ENCODE measurements at regions of chrX and their contacts with region 1.

Region 1: DNA sequence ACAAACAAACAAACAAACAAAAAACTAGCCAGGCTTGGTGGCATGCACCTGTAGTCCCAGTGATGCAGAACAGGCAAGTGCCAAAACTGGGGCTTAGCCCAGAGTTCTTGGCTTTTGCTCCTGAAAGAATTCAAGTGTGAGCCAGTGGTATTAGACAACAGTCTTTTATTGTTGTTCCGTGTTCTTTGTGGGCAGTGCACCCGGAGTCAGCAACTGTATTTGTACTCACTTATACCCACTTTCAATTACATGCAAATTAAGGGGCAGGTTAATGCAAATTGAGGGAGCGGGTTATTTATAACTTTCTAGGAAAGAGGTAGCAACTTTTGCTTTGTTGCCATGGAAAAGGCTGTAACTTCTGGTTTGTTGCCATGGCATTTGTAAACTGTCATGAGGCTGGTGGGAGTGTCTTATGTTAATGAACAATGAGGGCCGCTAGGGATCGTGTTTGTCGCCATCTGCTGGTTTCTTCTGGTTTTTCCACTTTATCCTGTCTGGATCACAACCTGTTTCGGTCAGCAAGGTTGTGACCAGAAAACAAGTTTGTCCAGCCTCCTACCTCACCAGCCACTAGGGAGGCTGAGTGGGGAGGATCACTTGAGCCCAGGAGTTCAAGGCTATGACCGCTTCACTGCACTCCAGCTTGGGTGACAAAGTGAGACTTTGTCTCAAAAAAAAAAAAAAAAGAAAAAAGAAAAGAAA is 88.8 kb upstream of the ESX1 start:
- DNase-seq: peak; percentile 53 to 81
- H3K4me3 ChIP-seq: no peak overlapping the region
- H3K27ac ChIP-seq: peak overlapping the region; percentile 16; the same call in 1 of the 2 replicates
- H3K4me1 ChIP-seq: peaks cover 8% of the 10 kb centered on the region; the same call in 1 of the 2 replicates
- H3K27me3 ChIP-seq: no peaks in the 10 kb centered on the region
- CTCF ChIP-seq: peak; percentile 70

Region 2: GRCh38 chrX:104195489-104196084 is 148.0 kb before region 1 on chrX:
- CTCF ChIA-PET with region 1: no interaction called
- POLR2A ChIA-PET with region 1: no interaction called
- intact Hi-C with region 1: loop called (anchors 5 kb)
- DNase-seq: peak in 1 of 2 experiments; percentile 39
- H3K4me3 ChIP-seq: no peak overlapping the region
- H3K27ac ChIP-seq: no peak overlapping the region
- H3K4me1 ChIP-seq: no peaks in the 10 kb centered on the region
- H3K27me3 ChIP-seq: no peaks in the 10 kb centered on the region
- CTCF ChIP-seq: peak; percentile 80

Region 3: GRCh38 chrX:104310090-104310489 is 33.5 kb before region 1 on chrX:
- CTCF ChIA-PET with region 1: interaction called, 7 read pairs
- POLR2A ChIA-PET with region 1: no interaction called
- intact Hi-C with region 1: loop called (anchors 1 kb)
- DNase-seq: peak in 1 of 2 experiments; percentile 41
- H3K4me3 ChIP-seq: no peak overlapping the region
- H3K27ac ChIP-seq: no peak overlapping the region
- H3K4me1 ChIP-seq: peaks cover 24% of the 10 kb centered on the region
- H3K27me3 ChIP-seq: no peaks in the 10 kb centered on the region
- CTCF ChIP-seq: peak; percentile 58

Region 4: GRCh38 chrX:104498291-104498690 is 154.7 kb after region 1 on chrX:
- CTCF ChIA-PET with region 1: no interaction called
- POLR2A ChIA-PET with region 1: no interaction called
- intact Hi-C with region 1: no loop called
- DNase-seq: no peak
- H3K4me3 ChIP-seq: no peak overlapping the region
- H3K27ac ChIP-seq: no peak overlapping the region
- H3K4me1 ChIP-seq: no peaks in the 10 kb centered on the region
- H3K27me3 ChIP-seq: no peaks in the 10 kb centered on the region
- CTCF ChIP-seq: no peak

Measured in PC-9 (cell line).